ENCODE measurements at regions of chr7 and their contacts with region 1.

Region 1: GRCh38 chr7:157336383-157337315 is at the start of gene DNAJB6:
- DNase-seq: peak; percentile 93 to 98 (median 97)
- ATAC-seq: peak; percentile 91
- H3K4me3 ChIP-seq: peak within 1 kb of the TSS; percentile 91
- H3K4me3 Mint-ChIP-seq: peak within 1 kb of the TSS; percentile 94 to 99 (median 97)
- H3K27ac ChIP-seq: peak within 1 kb of the TSS; percentile 83
- H3K27ac Mint-ChIP-seq: peak within 1 kb of the TSS; percentile 96 to 99 (median 98)
- H3K4me1 ChIP-seq: peaks cover 24 to 27% of the 10 kb centered on the region in 2 donors
- H3K4me1 Mint-ChIP-seq: peaks cover 26 to 45% (median 38%) of the 10 kb centered on the region in 7 donors
- H3K27me3 ChIP-seq: no peaks in the 10 kb centered on the region
- H3K27me3 Mint-ChIP-seq: peaks cover 0 to 26% (median 4%) of the 10 kb centered on the region in 5 donors
- total RNA-seq, gene DNAJB6: 79.8 to 219 (median 96.0) TPM

Region 2: DNA sequence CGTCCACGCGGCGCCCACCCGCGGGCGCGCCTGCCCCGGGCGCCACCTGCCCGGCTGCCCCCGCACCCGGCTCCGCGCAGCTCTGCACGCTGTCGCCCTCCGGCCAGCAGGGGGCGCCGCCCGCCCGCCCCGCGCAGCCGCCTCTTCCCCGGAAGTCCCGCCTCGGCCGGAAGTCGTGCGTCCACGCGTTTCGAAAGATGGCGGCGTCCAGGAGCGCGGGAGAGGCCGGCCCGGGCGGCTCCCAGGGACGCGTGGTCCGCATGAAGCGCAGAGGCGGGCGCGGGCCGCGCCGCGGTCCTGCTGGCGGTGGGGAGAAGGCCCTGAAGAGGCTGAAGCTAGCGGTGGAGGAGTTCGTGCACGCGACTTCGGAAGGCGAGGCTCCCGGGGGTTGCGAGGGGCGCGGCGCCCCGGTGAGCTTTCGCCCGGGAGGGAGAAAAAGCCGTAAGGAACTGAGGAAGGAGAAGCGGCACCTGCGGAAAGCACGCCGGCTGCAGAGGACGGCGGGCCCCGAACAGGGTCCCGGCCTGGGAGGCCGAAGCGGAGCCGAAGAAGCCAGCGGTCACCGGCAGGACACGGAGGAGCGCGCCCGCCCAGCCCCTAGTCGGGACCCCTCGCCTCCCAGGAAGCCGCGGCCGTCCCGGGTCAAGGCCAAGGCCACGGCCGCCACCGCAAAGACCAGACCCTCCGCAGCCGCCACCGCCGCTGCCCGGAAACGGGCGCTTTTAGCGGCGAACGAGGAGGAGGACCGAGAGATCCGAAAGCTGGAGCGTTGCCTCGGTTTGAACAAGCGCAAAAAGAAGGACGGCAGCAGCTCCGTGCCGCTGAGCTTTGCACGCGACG is 386.9 kb before region 1 on chr7 and contains the start of gene NOM1:
- CTCF ChIA-PET with region 1: no interaction called
- POLR2A ChIA-PET with region 1: no interaction called
- intact Hi-C with region 1: loop called in 1 of 2 experiments (anchors 2 kb)
- DNase-seq: peak; percentile 80 to 96 (median 90)
- ATAC-seq: peak; percentile 99
- H3K4me3 ChIP-seq: peak within 1 kb of the TSS; percentile 96
- H3K4me3 Mint-ChIP-seq: peak within 1 kb of the TSS; percentile 86 to 99 (median 97)
- H3K27ac ChIP-seq: peak within 1 kb of the TSS; percentile 82
- H3K27ac Mint-ChIP-seq: peak within 1 kb of the TSS; percentile 66 to 98 (median 90)
- H3K4me1 ChIP-seq: peaks cover 9 to 13% of the 10 kb centered on the region in 2 donors
- H3K4me1 Mint-ChIP-seq: peaks cover 8 to 44% (median 34%) of the 10 kb centered on the region in 7 donors
- H3K27me3 ChIP-seq: no peaks in the 10 kb centered on the region
- H3K27me3 Mint-ChIP-seq: peaks cover 1 to 23% (median 6%) of the 10 kb centered on the region in 5 donors
- total RNA-seq, gene NOM1: 28.1 to 40.7 (median 32.9) TPM

Region 3: DNA sequence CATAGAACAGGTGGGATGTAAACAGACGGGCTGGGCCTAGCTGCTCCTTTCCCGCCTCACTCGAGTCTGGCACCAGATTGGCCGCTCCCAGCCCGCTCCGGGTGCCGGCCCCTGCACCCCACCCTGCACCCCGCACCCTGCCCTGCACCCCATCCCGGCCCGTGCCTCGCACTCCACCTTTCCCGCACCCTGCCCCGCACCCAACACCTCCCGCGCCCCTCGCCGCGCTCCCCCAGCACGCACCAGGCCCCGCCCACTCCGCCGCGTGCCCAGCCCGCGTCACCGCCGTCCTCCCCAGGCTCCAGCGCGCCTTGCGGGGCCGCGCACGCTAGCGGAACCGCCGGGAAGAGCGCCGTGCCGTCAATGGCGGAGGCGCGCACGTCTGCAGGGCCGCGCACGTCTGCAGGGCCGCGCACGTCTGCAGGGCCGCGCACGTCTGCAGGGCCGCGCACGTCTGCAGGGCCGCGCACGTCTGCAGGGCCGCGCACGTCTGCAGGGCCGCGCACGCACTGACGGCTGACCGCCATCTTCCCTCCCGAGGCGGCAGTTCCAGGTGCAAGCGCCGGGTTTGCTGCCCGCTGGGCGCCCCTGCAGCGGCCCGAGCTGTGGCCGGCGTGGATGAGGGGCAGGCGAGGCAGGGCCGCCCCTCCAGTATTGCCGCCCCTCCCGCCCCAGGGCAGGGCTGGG is 198.1 kb before region 1 on chr7 and contains the start of gene UBE3C:
- CTCF ChIA-PET with region 1: no interaction called
- POLR2A ChIA-PET with region 1: no interaction called
- intact Hi-C with region 1: loop called (anchors 1 kb)
- DNase-seq: peak; percentile 88 to 96 (median 93)
- ATAC-seq: peak; percentile 91
- H3K4me3 ChIP-seq: peak within 1 kb of the TSS; percentile 82
- H3K4me3 Mint-ChIP-seq: peak within 1 kb of the TSS; percentile 77 to 93 (median 84)
- H3K27ac ChIP-seq: peak within 1 kb of the TSS; percentile 92
- H3K27ac Mint-ChIP-seq: peak within 1 kb of the TSS; percentile 76 to 99 (median 93)
- H3K4me1 ChIP-seq: peaks cover 35 to 43% of the 10 kb centered on the region in 2 donors
- H3K4me1 Mint-ChIP-seq: peaks cover 26 to 45% (median 42%) of the 10 kb centered on the region in 7 donors
- H3K27me3 ChIP-seq: no peaks in the 10 kb centered on the region
- H3K27me3 Mint-ChIP-seq: peaks cover 0 to 2% (median 0%) of the 10 kb centered on the region in 5 donors
- total RNA-seq, gene UBE3C: 41.6 to 64.6 (median 54.9) TPM

Region 4: GRCh38 chr7:157250605-157251228 is 85.9 kb before region 1 on chr7:
- CTCF ChIA-PET with region 1: interaction called, 4 read pairs
- POLR2A ChIA-PET with region 1: interaction called, 3 read pairs
- intact Hi-C with region 1: loop called in 1 of 2 experiments (anchors 1 kb)
- DNase-seq: peak in 7 of 9 donors; percentile 11 to 55 (median 37)
- ATAC-seq: peak; percentile 84
- H3K4me3 ChIP-seq: no peak overlapping the region
- H3K4me3 Mint-ChIP-seq: no peak overlapping the region
- H3K27ac ChIP-seq: no peak overlapping the region
- H3K27ac Mint-ChIP-seq: no peak overlapping the region
- H3K4me1 ChIP-seq: no peaks in the 10 kb centered on the region
- H3K4me1 Mint-ChIP-seq: peaks cover 0 to 5% (median 0%) of the 10 kb centered on the region in 7 donors
- H3K27me3 ChIP-seq: no peaks in the 10 kb centered on the region
- H3K27me3 Mint-ChIP-seq: no peaks in the 10 kb centered on the region

Region 5: DNA sequence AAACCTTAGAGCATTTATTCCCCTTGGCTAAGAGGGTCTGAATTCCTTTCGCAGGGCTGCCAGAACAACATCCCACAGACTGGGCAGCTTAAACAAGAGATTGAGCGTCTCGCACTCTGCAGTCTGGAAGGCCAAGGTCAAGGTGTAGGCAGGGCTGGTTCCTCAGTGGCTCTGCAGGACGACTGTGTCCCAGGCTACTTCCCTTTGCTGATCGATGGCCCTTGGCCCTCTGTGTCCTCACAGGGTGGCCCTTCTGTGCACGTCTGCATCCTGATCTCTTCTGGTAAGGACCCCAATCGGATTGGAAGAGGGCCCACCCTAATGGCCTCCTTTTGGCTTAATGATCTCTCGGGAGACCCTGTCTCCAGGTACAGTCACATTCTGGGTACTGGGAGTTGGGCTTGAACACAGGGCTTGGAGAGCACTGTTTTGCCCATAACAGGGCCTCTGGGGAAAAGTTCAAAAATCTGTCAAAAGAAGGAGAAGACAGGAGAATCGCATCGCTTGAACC is 35.0 kb before region 1 on chr7:
- CTCF ChIA-PET with region 1: interaction called, 3 read pairs
- POLR2A ChIA-PET with region 1: interaction called, 3 read pairs
- intact Hi-C with region 1: loop called (anchors 1 kb)
- DNase-seq: no peak
- ATAC-seq: no peak
- H3K4me3 ChIP-seq: no peak overlapping the region
- H3K4me3 Mint-ChIP-seq: peak overlapping the region; percentile 66 to 84 (median 72)
- H3K27ac ChIP-seq: no peak overlapping the region
- H3K27ac Mint-ChIP-seq: peak overlapping the region; percentile 3 to 88 (median 80)
- H3K4me1 ChIP-seq: peaks cover 10 to 23% of the 10 kb centered on the region in 2 donors
- H3K4me1 Mint-ChIP-seq: peaks cover 19 to 39% (median 36%) of the 10 kb centered on the region in 7 donors
- H3K27me3 ChIP-seq: no peaks in the 10 kb centered on the region
- H3K27me3 Mint-ChIP-seq: no peaks in the 10 kb centered on the region

Region 6: GRCh38 chr7:157457441-157458253 is 121.0 kb after region 1 on chr7:
- CTCF ChIA-PET with region 1: no interaction called
- POLR2A ChIA-PET with region 1: no interaction called
- intact Hi-C with region 1: no loop called
- DNase-seq: no peak
- ATAC-seq: no peak
- H3K4me3 ChIP-seq: no peak overlapping the region
- H3K4me3 Mint-ChIP-seq: no peak overlapping the region
- H3K27ac ChIP-seq: no peak overlapping the region
- H3K27ac Mint-ChIP-seq: peak overlapping the region in 1 of 9 donors; percentile 15
- H3K4me1 ChIP-seq: no peaks in the 10 kb centered on the region
- H3K4me1 Mint-ChIP-seq: peaks cover 6 to 18% (median 12%) of the 10 kb centered on the region in 7 donors
- H3K27me3 ChIP-seq: no peaks in the 10 kb centered on the region
- H3K27me3 Mint-ChIP-seq: peaks cover 0 to 60% (median 0%) of the 10 kb centered on the region in 5 donors

Region 7: DNA sequence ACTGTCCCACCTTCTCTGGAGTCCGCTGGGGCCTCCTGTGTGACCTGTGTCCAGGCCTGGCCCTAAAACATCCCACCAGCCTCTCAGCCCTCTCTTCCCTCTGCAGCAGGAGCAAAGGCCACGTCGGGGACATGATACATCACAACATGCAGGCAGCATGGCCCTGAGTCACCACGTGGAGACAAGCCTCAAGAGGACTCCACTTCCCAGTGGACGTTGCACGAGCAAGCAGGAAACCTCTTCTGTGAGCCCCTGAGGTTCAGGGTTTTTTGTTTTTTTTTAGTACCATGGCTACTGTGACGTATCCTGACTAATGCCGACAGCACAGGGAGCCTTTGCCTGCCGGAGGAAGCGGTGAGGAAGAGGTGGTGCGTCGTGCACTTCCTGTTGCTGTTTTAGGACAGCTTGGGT is 166.1 kb after region 1 on chr7:
- CTCF ChIA-PET with region 1: no interaction called
- POLR2A ChIA-PET with region 1: no interaction called
- intact Hi-C with region 1: loop called in 1 of 2 experiments (anchors 5 kb)
- DNase-seq: peak; percentile 33 to 94 (median 92)
- ATAC-seq: peak; percentile 98
- H3K4me3 ChIP-seq: peak overlapping the region; percentile 26
- H3K4me3 Mint-ChIP-seq: peak overlapping the region; percentile 77 to 93 (median 87)
- H3K27ac ChIP-seq: peak overlapping the region; percentile 68
- H3K27ac Mint-ChIP-seq: peak overlapping the region; percentile 86 to 100 (median 96)
- H3K4me1 ChIP-seq: peaks cover 20 to 22% of the 10 kb centered on the region in 2 donors
- H3K4me1 Mint-ChIP-seq: peaks cover 20 to 37% (median 34%) of the 10 kb centered on the region in 7 donors
- H3K27me3 ChIP-seq: no peaks in the 10 kb centered on the region
- H3K27me3 Mint-ChIP-seq: peaks cover 0 to 22% (median 7%) of the 10 kb centered on the region in 5 donors